MCF 10A (cell line): ENCODE measurements at regions of chr3 and their contacts with region 1.

Region 1: DNA sequence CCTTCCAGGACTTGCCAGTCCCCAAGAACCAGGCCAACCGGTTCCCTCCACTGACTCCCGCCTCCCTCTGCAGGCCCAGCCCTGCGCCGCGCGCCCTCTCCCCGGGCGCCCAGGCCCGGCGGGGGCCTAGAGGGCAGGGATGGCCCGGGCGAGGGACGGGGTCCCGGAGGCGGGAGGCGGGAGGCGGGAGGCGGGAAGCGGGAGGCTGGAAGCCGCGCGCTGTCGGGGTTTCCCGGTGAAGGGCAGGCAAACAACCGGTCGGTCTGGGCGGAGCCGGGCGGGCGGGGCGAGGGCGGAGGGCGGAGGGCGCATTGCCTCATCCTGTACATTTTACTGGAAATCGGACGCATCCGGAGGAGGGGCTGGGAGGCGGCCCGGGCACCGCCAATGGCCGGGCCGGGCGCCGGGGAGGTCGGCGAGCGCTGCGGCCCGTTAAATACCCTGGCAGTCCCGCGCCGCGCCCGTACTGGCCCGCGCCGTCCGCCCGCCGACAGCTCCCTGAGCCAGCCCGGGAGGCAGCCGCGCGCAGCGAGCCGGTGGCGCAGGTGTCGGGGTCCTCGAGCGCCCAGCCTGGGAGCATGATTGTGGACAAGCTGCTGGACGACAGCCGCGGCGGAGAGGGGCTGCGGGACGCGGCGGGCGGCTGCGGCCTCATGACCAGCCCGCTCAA is at the start of gene NFKBIZ:
- DNase-seq: peak; percentile 93
- H3K4me3 Mint-ChIP-seq: peak within 1 kb of the TSS; percentile 94
- H3K27ac Mint-ChIP-seq: peak within 1 kb of the TSS; percentile 99
- H3K4me1 Mint-ChIP-seq: peaks cover 35% of the 10 kb centered on the region
- H3K27me3 Mint-ChIP-seq: no peaks in the 10 kb centered on the region
- CTCF ChIP-seq: no peak
- total RNA-seq, gene NFKBIZ: 48.9 and 58.8 TPM in 2 replicates

Region 2: DNA sequence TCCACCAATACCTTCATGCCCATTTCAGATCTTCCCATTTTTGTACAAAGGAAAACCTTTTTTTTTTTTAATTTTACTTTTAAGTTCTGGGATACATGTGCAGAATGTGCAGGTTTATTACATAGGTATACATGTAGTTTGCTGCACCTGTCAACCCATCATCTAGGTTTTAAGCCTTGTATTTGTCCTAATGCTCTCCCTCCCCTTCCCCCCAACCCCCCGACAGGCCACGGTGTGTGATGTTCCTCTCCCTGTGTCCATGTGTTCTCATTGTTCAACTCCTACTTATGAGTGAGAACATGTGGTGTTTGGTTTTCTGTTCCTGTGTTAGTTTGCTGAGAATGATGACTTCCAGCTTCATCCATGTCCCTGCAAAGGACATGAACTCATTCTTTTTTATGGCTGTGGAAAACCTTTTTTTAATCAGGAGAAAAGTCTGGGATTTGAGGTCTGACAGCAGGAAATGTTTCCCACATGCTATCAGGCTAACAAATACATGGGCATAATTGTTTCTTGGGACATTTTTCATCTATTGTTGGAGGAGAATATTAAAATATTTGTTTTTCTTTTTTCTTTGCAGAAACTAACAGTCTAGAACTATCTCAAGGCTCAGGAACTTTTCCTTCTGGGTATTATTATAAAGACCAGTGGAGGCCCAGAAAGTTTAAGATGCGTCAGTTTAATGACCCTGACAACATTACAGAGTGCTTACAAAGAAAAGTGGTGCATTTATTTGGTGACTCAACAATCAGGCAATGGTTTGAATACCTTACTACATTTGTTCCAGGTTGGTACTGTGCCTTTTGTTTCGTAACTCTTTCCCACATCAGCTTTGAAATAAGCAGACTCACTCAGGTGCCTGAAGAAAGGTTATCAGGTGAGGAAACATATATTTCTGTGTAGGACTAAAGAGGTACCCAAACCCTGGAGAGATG is 32.7 kb before region 1 on chr3:
- CTCF ChIA-PET with region 1: interaction called, 9 read pairs
- POLR2A ChIA-PET with region 1: interaction called, 22 read pairs
- intact Hi-C with region 1: loop called (anchors 5 kb)
- DNase-seq: peak; percentile 51
- H3K4me3 Mint-ChIP-seq: no peak overlapping the region
- H3K27ac Mint-ChIP-seq: no peak overlapping the region
- H3K4me1 Mint-ChIP-seq: no peaks in the 10 kb centered on the region
- H3K27me3 Mint-ChIP-seq: no peaks in the 10 kb centered on the region
- CTCF ChIP-seq: no peak

Region 3: DNA sequence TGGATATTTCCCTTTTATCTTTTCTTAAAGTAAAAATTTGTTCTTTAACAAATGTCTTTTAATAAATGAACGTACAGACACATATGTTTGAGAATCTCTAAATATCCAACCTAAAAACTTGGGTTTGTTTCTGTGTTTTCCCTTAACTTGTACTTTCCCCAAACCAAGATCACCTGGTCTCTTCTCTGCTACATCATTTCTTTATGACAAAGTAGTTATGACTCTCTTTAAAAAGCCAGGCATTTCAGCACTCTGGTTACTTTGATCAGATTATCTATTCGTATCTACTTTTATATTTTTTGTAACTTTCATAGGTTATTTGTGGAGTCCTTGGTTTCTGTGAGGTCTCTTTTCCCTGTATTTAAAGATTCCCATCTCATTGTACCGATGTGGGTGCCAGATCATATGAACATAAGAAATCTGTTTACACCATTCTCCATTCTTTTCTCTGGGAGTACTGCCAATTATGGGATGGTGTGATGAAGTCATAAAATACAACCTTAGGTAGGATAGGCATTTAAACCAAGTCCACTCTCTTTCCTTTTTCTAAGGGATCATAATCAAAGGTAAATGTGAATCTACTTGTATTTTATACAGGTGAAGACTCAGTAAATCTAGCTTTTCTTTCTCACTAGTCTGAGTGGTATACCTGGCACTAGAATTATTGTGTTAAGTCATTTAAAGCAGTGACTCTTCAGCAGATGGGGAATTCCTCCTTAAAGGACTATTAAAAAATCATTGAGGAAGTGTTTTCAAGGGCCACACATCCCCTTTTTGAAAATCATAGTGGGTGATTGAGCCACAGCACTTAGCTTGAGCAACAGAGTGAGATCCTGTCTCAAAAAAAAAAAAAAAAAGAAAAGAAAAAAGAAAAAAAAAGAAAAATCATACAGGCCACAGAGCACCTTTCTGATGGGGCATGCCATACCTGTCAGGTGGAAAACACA is 12.3 kb before region 1 on chr3:
- CTCF ChIA-PET with region 1: interaction called, 6 read pairs
- POLR2A ChIA-PET with region 1: interaction called, 121 read pairs
- intact Hi-C with region 1: no loop called
- DNase-seq: peak; percentile 81
- H3K4me3 Mint-ChIP-seq: no peak overlapping the region
- H3K27ac Mint-ChIP-seq: peak overlapping the region; percentile 79
- H3K4me1 Mint-ChIP-seq: peaks cover 14% of the 10 kb centered on the region
- H3K27me3 Mint-ChIP-seq: no peaks in the 10 kb centered on the region
- CTCF ChIP-seq: no peak

Region 4: DNA sequence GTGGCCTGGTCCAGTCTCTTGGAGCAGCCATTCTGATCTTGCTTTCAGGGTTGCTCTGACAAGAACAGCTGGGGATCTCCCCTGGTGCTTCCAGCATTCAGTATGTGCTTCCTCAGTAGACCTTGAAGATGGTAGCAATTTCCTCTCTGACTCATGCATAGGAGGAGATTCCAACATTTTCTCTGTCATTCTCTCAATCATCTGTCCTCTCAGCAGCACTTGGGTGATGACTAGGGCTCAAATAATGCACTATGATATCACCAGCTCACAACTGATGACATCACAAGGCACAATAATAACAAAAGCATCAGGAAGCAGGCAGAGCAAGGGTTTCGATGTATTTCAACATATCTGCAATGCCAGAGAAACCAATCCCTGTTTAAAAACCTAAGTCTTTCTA is 52.9 kb after region 1 on chr3:
- CTCF ChIA-PET with region 1: interaction called, 3 read pairs
- POLR2A ChIA-PET with region 1: interaction called, 5 read pairs
- intact Hi-C with region 1: loop called (anchors 1 kb)
- DNase-seq: peak; percentile 81
- H3K4me3 Mint-ChIP-seq: no peak overlapping the region
- H3K27ac Mint-ChIP-seq: no peak overlapping the region
- H3K4me1 Mint-ChIP-seq: peaks cover 10% of the 10 kb centered on the region
- H3K27me3 Mint-ChIP-seq: no peaks in the 10 kb centered on the region
- CTCF ChIP-seq: no peak

Region 5: DNA sequence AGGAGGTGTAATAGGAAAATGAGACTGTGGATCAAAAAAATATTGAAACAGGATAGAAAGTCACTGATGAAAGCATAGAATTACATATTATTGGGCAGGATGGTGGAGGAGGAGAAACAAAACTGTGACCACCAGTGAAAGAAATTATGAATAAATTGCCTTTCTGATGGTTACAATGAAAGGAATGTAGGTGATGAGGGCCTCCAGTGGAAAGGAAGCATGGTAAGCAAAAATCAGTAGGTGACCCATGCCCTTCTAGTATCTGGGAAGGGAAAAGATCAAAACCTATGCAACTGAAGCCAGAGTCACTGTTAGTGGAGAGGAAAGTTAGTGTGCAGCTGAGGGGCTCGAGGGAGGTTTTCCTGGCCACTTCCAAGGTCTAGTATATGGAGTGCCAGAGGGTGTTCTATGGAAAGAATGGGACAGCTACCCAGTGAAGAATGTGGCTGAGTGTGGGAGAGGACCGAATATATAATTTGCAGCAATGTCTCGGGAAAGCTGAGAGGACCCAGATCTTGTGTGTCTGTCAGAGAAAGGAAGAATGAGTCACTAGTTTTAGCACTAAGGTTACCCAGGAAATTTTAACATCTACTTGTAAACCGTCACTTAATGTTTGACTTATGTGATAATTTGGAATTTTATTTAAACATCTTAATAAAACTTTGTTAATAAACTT is 146.3 kb after region 1 on chr3:
- CTCF ChIA-PET with region 1: no interaction called
- POLR2A ChIA-PET with region 1: interaction called, 10 read pairs
- intact Hi-C with region 1: no loop called
- DNase-seq: peak; percentile 24
- H3K4me3 Mint-ChIP-seq: no peak overlapping the region
- H3K27ac Mint-ChIP-seq: peak overlapping the region; percentile 55
- H3K4me1 Mint-ChIP-seq: peaks cover 25% of the 10 kb centered on the region
- H3K27me3 Mint-ChIP-seq: no peaks in the 10 kb centered on the region
- CTCF ChIP-seq: no peak

Region 6: DNA sequence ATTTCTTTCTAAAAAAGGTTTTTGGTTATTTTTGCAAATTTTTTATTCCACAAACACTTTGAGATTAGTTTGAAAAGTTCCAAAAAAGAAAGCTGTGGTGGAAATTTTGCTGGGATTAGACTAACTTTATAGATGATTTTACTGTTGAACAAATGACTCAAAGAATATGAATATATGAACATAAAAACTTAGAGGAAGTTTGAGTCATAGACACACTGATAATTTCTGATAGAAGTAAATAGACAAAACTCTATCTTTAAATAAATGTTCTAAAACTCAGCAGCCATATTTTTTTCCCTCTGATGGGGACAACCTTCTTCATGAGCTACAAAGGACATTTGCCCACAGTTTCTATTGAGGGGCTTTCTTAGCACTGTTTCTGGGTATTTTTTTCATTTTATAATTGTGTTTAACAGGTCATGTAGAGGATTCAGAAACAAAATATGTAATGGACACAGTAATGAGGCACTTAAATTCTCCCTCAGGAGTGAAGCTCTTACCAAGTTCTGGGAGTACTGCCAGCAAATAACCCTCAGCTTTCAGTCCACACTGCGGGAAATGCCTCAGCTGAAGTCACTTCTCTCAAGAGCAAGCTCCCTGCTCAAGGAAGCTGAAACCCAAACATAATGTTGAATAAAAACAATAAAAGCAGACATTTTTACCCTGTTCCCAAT is 157.8 kb after region 1 on chr3:
- CTCF ChIA-PET with region 1: no interaction called
- POLR2A ChIA-PET with region 1: no interaction called
- intact Hi-C with region 1: no loop called
- DNase-seq: peak; percentile 74
- H3K4me3 Mint-ChIP-seq: peak overlapping the region; percentile 36
- H3K27ac Mint-ChIP-seq: peak overlapping the region; percentile 95
- H3K4me1 Mint-ChIP-seq: peaks cover 10% of the 10 kb centered on the region
- H3K27me3 Mint-ChIP-seq: no peaks in the 10 kb centered on the region
- CTCF ChIP-seq: no peak

Region 7: DNA sequence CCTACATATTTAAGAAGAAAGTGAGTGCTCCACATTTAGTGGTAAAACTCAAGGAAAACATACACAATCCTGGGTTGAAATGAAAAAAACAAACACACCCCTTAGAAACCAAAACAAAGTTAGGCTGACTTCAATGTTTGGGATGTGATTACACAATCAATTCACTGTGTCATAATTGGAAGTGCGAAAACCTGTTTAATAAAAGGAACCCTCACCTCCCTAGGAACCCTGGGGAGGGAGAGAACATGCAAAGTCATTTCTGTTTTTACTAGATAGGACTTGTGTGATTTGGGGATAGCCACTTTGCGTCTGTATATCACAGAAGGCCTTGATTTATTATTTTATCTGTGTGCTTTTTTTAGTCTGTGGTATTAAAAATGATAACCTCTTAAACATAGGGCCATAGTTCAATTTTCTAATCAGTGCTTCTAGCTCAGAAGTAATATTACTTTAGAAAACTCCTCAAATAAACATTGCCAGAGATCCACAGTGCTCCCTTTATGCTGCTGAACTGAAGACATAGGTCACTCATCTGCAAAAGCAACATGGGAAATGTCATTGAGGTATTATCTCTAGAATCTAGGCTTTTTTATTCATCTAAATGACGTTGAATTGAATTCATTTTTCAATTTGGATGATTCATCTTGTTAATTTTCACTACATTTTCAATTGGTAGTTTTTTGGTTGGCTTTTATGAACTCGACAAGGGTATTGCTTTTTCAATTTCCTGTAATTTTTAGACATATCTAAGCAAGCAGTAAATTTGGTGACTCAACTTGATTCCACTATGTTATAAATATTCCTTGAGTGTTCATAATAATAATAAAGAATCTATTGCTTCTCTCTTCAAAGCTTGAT is 275.3 kb after region 1 on chr3:
- CTCF ChIA-PET with region 1: no interaction called
- POLR2A ChIA-PET with region 1: interaction called, 20 read pairs
- intact Hi-C with region 1: loop called (anchors 1 kb)
- DNase-seq: peak; percentile 83
- H3K4me3 Mint-ChIP-seq: peak overlapping the region; percentile 13
- H3K27ac Mint-ChIP-seq: peak overlapping the region; percentile 98
- H3K4me1 Mint-ChIP-seq: peaks cover 24% of the 10 kb centered on the region
- H3K27me3 Mint-ChIP-seq: no peaks in the 10 kb centered on the region
- CTCF ChIP-seq: no peak